ENCODE measurements at regions of chr12 and their contacts with region 1.

Region 1: GRCh38 chr12:52327052-52327829 is 6.0 kb upstream of the KRT83 start:
- DNase-seq: peak; percentile 98 to 100
- ATAC-seq: peak; percentile 94 to 98
- H3K4me3 ChIP-seq: no peak overlapping the region
- H3K27ac ChIP-seq: peak overlapping the region; percentile 75 to 90
- H3K4me1 ChIP-seq: peaks cover 19% of the 10 kb centered on the region
- CTCF ChIP-seq: peak; percentile 100
- EP300 ChIP-seq: no peak; a peak in 1 of 5 replicates
- POLR2A ChIP-seq: no peak
- RAD21 ChIP-seq: peak; percentile 95 to 96

Region 2: DNA sequence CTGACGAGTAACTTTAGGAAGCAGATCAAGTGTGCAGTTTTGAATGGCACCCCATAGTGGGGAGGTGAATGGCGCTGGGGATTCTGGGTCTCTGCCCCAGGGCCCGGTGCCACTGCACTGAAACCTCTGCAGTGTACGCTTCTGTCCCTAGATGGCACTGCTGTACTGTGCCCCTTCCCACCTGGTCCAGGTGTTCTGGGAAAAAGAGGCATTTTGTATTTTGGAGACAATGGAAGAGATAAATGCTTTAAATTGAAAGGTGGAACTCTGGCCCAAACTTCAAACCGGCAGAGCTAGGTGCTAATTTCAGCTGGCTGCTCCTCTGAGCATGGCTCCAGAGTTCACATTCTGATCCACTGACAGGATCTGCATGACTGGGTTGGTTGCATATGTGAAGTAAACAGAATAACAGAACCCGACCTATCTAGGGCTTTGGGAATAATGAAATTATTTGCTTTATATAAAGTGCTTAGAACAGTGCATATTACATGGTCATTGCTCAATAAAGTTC is 187.6 kb before region 1 on chr12:
- CTCF ChIA-PET with region 1: interaction called, 47 read pairs
- POLR2A ChIA-PET with region 1: no interaction called
- DNase-seq: peak; percentile 68 to 90
- ATAC-seq: peak; percentile 64 to 66; a peak in 5 of 6 replicates
- H3K4me3 ChIP-seq: no peak overlapping the region
- H3K27ac ChIP-seq: peak overlapping the region; percentile 100; a peak in 5 of 6 replicates
- H3K4me1 ChIP-seq: peaks cover 26% of the 10 kb centered on the region
- CTCF ChIP-seq: peak; percentile 97
- EP300 ChIP-seq: no peak
- POLR2A ChIP-seq: no peak
- RAD21 ChIP-seq: peak; percentile 92 to 97

Region 3: GRCh38 chr12:52243856-52244614 is 83.2 kb before region 1 on chr12:
- CTCF ChIA-PET with region 1: interaction called, 42 read pairs
- POLR2A ChIA-PET with region 1: interaction called, 9 read pairs
- DNase-seq: peak; percentile 92 to 93
- ATAC-seq: peak; percentile 22 to 31
- H3K4me3 ChIP-seq: peak overlapping the region; percentile 24; the same call in 1 of the 3 replicates
- H3K27ac ChIP-seq: peak overlapping the region; percentile 92 to 97
- H3K4me1 ChIP-seq: peaks cover 100% of the 10 kb centered on the region
- CTCF ChIP-seq: no peak
- EP300 ChIP-seq: peak; percentile 55 to 80; a peak in 3 of 5 replicates
- POLR2A ChIP-seq: no peak
- RAD21 ChIP-seq: no peak; a peak in 2 of 5 replicates

Region 4: GRCh38 chr12:52268212-52268611 is 59.0 kb before region 1 on chr12:
- CTCF ChIA-PET with region 1: interaction called, 32 read pairs
- POLR2A ChIA-PET with region 1: no interaction called
- DNase-seq: no peak
- ATAC-seq: no peak
- H3K4me3 ChIP-seq: no peak overlapping the region
- H3K27ac ChIP-seq: peak overlapping the region; percentile 7 to 65; a peak in 3 of 6 replicates
- H3K4me1 ChIP-seq: peaks cover 13% of the 10 kb centered on the region
- CTCF ChIP-seq: no peak
- EP300 ChIP-seq: no peak
- POLR2A ChIP-seq: no peak
- RAD21 ChIP-seq: no peak

Region 5: DNA sequence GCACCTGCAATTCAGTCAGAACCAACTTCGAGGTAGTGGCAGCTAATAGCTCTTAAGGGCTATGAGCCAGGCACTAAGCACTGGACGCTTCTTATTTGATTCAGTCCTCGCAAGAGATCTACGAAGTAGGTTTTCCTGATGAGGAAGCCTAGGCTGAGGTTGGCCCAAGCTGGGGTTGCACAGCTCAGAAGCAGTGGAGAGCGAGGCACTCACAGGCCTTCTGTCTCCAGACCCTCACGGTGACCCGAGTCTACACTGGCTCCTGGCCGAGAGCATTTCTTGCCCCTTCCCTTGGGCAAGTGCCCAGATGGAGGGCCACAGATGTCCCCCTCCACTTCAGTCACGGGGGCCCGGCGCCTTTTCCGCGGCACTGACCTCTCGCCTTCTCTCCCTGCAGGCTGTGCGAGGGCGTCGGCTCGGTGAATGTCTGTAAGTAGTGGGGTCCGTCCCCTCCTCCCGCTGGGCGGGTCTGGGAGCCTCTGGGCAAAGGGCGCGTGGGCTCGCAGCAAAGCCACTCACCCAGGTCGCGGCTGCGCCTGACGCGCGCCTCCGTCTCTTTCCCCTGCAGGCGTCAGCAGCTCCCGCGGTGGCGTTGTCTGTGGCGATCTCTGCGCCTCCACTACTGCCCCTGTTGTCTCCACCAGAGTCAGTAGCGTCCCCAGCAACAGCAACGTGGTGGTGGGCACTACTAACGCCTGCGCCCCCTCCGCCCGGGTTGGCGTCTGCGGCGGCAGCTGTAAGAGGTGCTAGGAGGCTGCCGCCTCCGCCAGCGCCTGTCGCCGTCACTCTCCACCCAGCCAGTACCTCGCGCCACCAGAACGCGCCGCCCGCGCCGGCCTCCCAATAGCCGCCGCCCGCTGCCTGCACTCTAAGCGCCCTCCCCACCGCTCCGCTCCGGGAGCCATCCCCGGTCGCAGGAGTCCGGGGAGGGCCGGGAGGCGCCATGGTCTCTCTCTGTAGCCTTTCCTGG is 19.1 kb before region 1 on chr12:
- CTCF ChIA-PET with region 1: interaction called, 217 read pairs
- POLR2A ChIA-PET with region 1: interaction called, 3 read pairs
- DNase-seq: peak in 1 of 2 experiments; percentile 49
- ATAC-seq: peak; percentile 55 to 77
- H3K4me3 ChIP-seq: no peak overlapping the region
- H3K27ac ChIP-seq: peak overlapping the region; percentile 60 to 87
- H3K4me1 ChIP-seq: peaks cover 6% of the 10 kb centered on the region; the same call in 1 of the 3 replicates
- CTCF ChIP-seq: no peak
- EP300 ChIP-seq: no peak
- POLR2A ChIP-seq: no peak
- RAD21 ChIP-seq: no peak

Region 6: DNA sequence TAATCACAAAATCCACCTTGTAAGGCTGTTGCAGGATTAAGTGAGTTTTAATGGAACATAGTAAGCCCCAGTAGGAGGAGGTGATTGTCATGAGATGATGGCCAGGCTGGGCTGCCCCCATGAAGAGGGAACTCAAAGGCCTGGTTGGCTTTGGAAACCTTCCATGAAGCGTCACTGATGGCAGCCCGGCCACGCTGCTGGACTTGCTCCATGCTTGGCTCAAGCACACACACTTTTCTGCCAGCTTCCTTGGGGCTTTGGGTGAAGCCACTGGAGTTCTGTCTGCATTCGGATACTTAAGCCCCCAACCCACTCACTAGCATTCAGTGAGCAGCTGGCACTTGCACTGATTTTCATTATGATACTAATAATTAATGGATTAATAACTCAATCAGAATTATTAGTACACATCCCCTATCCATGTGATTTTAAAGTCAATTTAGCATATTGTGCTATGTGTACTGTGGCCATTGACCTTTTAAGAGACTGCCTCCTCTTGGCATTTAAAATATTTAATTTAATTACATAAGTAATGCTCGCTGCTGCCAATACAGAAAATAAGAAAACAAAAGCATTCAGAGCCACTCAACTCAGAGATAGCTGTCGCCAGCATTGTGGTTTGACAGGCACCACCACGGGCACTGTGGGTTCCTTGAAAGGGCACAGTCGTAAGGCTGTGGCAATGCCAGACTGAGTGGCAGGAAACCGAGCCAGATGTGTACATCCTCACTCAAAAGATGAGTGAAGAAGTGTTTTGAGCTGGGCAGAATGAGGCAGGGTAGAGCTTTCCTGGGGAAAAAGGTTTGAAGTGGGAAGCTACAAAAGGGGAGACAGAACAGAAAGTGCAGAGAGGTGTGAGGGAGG is 24.2 kb after region 1 on chr12:
- CTCF ChIA-PET with region 1: interaction called, 28 read pairs
- POLR2A ChIA-PET with region 1: no interaction called
- DNase-seq: no peak
- ATAC-seq: no peak
- H3K4me3 ChIP-seq: no peak overlapping the region
- H3K27ac ChIP-seq: no peak overlapping the region
- H3K4me1 ChIP-seq: peaks cover 1% of the 10 kb centered on the region; the same call in 1 of the 3 replicates
- CTCF ChIP-seq: no peak
- EP300 ChIP-seq: no peak
- POLR2A ChIP-seq: no peak
- RAD21 ChIP-seq: no peak

Region 7: DNA sequence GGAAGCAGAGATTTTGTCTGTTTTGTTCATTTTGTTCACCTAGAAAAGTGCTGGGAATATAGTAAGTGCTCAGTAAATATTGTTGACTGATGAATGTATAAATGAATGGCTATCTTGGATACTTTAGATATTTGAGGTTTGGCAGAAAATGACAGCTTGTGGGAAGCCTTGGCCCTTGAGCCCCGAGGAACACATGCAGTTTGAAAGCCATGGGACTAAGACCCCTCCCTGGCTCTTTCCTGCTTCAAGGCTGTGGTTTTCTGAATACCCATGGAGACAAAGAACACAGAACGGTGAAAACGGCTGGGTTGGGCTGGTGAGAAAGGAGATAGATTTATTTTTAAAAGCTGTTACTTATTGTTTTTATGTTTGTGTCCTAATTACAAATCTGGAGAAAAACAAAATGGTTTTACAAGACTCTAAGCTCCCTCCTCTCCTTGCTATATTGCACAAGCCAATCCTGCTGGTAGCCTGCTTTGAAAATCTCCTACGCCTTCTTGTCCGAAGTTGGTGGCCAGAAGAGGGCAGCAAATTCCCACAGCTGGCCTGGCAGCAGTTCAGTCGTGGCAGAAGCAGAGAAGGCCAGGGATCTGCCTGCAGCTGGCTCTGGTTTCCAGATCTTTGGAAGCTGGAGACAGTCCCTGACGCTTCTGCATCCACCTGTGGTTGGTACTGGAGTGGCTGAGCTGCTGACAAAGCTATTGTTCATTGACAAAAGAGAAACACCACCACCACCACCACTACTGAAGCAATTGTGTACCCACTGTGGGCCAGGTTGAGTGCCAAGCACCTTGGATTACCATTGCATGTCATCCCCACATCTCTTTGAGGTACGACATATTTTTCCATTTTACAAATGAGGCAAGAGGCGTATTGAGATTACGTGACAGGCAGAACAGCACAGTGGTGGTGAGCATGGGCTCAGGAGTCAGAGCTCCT is 45.2 kb after region 1 on chr12:
- CTCF ChIA-PET with region 1: interaction called, 17 read pairs
- POLR2A ChIA-PET with region 1: no interaction called
- DNase-seq: peak; percentile 93 to 95
- ATAC-seq: peak; percentile 95 to 97
- H3K4me3 ChIP-seq: no peak overlapping the region
- H3K27ac ChIP-seq: peak overlapping the region; percentile 34 to 67
- H3K4me1 ChIP-seq: peaks cover 10% of the 10 kb centered on the region; the same call in 1 of the 3 replicates
- CTCF ChIP-seq: peak; percentile 96
- EP300 ChIP-seq: no peak
- POLR2A ChIP-seq: no peak
- RAD21 ChIP-seq: peak; percentile 97 to 99

Measured in A549 (cell line).